Left ventricle myocardium superior (tissue), 1 donor: ENCODE measurements at regions of chr3 and their contacts with region 1.

Region 1: DNA sequence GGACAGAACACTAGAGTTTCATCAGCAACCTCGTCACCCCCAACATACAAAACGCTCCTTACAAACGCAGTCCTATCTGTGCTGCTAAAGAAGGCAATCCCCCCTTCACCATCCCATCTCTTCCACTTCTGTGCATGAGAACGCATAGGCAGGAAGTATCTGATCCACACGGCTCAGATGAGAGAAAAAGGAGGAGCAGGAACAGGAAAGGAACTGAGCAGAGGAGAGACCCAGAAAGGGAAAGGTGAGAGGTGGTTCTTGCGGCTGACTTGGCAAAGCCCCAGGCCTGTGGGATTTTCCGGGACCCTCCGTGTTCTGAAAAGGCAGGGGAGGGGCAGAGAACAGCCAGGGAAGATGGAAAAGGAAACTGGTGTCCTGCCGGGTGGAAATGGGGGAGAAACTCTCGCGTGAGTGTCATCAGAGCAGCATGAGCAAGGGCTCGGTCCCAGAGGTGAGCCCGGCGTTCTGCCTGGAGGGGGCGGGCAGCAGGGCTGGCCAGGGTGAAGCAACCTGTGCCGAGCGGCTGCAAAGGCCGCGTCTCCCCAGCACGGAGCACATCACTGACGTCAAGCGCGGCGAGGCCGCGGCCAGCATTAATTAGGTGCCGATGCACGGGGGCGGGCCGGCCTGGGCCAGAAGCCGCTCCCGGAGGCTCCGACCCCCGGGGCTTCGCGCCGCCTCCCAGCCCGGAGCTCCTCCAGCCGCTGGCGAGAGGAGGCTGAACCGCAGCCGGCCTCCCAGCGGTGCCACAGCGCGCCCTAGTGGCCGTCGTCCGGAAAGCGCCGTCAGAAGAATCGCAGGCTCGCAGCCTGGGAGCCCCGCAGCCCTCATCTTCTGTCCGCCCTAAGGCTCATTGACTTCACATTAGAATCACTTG is 35.8 kb downstream of the CPN2 start:
- DNase-seq: peak; percentile 92
- ATAC-seq: peak; percentile 89

Region 2: DNA sequence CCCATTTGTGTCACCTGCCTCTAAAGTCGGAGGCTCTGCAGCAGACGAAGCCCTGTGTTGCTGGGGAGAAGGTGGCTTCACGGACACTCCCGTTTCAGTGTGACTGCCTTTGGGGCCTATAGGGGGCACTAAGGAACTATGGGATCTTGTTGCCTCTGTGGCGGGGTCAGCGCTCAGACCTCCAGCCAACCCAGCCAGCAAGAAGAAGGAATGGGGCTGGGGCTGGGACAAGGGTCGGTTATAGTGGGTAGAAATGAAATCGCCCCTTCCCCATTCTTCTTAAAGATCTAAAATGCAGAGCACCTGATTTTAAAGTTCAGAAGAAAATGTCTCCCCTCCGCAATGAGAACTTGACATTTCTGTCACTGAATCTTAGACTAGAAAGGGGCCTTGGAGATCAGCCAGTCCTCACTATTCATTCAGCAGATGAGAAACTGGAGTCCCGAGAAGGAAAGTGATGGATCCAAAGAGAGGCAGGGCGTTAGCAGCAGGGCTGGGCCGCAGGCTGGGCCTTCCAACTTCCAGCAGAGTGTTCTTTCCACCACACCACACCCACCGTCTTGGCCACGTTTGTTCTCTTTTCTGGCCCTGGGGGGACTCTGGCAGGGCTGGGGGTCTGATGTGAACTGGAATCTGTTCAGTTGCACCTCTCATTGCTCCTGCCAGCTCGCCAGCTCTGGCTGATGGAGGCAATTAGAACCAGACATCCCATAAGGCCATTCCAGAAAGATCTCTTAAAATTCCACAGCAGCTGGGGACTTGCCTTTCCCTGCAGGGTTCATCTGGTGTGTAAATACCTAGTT is 526.9 kb before region 1 on chr3:
- intact Hi-C with region 1: loop called (anchors 5 kb)
- DNase-seq: peak; percentile 65
- ATAC-seq: peak; percentile 96

Region 3: DNA sequence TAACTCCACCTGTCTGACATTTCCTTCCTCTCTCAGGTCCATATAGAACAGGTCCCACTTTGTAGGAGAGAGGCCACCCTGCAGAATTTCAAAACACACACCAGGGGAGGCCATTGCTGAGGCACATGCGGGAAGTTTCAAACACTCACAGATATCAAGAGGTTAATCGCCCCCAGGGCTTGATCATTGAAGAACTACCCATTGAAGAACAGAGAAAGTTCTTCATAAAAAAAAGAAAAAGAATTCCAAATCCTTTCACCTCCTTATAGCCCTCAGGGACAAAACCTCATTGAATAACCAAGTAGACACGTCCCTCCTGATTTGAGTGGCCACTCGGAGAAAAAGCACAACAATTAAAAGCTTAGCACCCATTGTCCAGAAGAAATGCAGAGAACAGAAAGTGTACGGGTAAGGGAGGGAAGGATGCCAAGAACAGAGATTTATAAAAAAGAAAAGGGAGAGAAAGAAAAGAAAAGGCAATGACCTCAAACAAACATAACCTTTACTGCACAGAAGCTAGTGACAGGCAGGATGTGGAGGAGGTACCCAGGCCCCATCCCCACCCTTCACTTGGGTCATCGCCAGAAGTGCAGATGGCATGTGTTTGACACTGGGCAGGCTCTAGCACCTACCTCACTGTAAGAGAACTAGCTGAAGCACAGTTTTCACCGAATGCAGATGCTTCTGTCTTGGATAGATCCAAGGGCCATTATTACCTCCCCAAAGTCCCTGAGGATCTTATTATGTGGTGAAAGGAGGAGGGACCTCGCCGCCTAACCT is 291.6 kb before region 1 on chr3:
- intact Hi-C with region 1: no loop called
- DNase-seq: no peak
- ATAC-seq: no peak

Region 4: GRCh38 chr3:194134757-194135528 is 180.4 kb before region 1 on chr3:
- intact Hi-C with region 1: loop called (anchors 10 kb)
- DNase-seq: peak; percentile 96
- ATAC-seq: peak; percentile 76